ENCODE measurements at regions of chr19 and their contacts with region 1.

Region 1: GRCh38 chr19:4007021-4007835 is at the start of gene PIAS4:
- DNase-seq: peak; percentile 95 to 97 (median 95)
- H3K4me3 ChIP-seq: peak within 1 kb of the TSS; percentile 47 to 73
- H3K4me3 Mint-ChIP-seq: peak within 1 kb of the TSS; percentile 83 to 92 (median 89)
- H3K27ac ChIP-seq: peak within 1 kb of the TSS; percentile 63
- H3K27ac Mint-ChIP-seq: peak within 1 kb of the TSS; percentile 81 to 91 (median 86)
- H3K4me1 ChIP-seq: peaks cover 42% of the 10 kb centered on the region
- H3K4me1 Mint-ChIP-seq: peaks cover 11 to 33% (median 18%) of the 10 kb centered on the region in 4 donors
- H3K27me3 ChIP-seq: no peaks in the 10 kb centered on the region
- H3K27me3 Mint-ChIP-seq: no peaks in the 10 kb centered on the region
- total RNA-seq, gene PIAS4: 38.6 to 42.6 TPM

Region 2: DNA sequence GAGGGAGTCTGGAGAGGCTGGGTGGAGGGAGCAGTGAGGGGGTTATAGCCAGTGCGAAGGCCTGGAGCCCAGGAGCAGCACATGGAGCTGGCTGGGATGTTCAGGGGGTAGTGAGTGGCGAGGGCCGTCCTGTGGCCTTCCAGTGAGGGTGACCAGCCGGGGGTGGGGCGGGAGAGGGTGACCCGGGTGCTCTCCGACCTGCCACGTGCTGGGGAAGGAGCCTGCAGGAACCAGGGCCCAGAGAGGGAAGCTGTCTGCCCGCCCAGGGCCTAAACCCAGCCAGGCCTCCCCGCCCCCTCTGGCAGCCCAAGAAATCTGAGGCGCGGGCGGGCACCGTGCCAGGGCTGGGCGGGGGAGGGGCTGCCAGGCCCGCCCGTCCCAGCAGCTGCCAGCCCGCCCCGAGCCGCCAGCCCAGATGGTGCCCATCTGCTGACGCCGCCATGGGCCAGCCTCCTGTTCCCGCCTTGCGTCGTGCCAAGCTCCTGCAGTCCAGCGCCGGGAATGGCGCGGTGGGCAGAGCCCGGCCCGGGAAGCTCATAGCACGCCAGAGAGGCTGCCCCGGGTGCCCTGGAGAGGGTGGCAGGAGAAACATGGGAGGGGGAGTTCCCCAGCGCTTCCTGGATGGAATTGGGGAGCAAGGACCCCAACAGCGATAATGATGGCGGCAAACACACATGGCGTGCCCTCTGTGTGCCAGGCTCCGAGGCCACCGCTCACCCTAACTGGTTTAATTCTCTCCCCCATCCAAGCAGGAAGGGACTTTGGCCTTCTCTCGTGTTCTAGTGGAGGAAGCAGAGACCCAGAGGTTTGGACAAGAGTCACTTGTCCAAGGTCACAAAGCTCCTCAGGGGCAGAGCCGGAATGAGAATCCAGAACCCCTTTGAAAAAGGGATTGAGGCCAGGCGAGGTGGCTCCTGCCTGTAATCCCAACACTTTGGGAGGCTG is 619.3 kb before region 1 on chr19:
- CTCF ChIA-PET with region 1: no interaction called
- POLR2A ChIA-PET with region 1: no interaction called
- intact Hi-C with region 1: no loop called
- DNase-seq: no peak
- H3K4me3 ChIP-seq: no peak overlapping the region
- H3K4me3 Mint-ChIP-seq: no peak overlapping the region
- H3K27ac ChIP-seq: no peak overlapping the region
- H3K27ac Mint-ChIP-seq: peak overlapping the region in 2 of 7 donors; percentile 12 to 60
- H3K4me1 ChIP-seq: peaks cover 5% of the 10 kb centered on the region
- H3K4me1 Mint-ChIP-seq: peaks cover 10 to 26% (median 17%) of the 10 kb centered on the region in 4 donors
- H3K27me3 ChIP-seq: no peaks in the 10 kb centered on the region
- H3K27me3 Mint-ChIP-seq: no peaks in the 10 kb centered on the region

Region 3: GRCh38 chr19:3970808-3971598 is 36.2 kb before region 1 on chr19 and contains the start of gene DAPK3:
- CTCF ChIA-PET with region 1: no interaction called
- POLR2A ChIA-PET with region 1: interaction called, 3 read pairs
- intact Hi-C with region 1: loop called (anchors 1 kb)
- DNase-seq: peak; percentile 85 to 87 (median 85)
- H3K4me3 ChIP-seq: peak within 1 kb of the TSS; percentile 74 to 78
- H3K4me3 Mint-ChIP-seq: peak within 1 kb of the TSS; percentile 87 to 92 (median 91)
- H3K27ac ChIP-seq: peak within 1 kb of the TSS; percentile 86
- H3K27ac Mint-ChIP-seq: peak within 1 kb of the TSS; percentile 90 to 94 (median 92)
- H3K4me1 ChIP-seq: peaks cover 25% of the 10 kb centered on the region
- H3K4me1 Mint-ChIP-seq: peaks cover 11 to 34% (median 25%) of the 10 kb centered on the region in 4 donors
- H3K27me3 ChIP-seq: no peaks in the 10 kb centered on the region
- H3K27me3 Mint-ChIP-seq: no peaks in the 10 kb centered on the region
- total RNA-seq, gene DAPK3: 40.0 to 40.7 TPM

Region 4: DNA sequence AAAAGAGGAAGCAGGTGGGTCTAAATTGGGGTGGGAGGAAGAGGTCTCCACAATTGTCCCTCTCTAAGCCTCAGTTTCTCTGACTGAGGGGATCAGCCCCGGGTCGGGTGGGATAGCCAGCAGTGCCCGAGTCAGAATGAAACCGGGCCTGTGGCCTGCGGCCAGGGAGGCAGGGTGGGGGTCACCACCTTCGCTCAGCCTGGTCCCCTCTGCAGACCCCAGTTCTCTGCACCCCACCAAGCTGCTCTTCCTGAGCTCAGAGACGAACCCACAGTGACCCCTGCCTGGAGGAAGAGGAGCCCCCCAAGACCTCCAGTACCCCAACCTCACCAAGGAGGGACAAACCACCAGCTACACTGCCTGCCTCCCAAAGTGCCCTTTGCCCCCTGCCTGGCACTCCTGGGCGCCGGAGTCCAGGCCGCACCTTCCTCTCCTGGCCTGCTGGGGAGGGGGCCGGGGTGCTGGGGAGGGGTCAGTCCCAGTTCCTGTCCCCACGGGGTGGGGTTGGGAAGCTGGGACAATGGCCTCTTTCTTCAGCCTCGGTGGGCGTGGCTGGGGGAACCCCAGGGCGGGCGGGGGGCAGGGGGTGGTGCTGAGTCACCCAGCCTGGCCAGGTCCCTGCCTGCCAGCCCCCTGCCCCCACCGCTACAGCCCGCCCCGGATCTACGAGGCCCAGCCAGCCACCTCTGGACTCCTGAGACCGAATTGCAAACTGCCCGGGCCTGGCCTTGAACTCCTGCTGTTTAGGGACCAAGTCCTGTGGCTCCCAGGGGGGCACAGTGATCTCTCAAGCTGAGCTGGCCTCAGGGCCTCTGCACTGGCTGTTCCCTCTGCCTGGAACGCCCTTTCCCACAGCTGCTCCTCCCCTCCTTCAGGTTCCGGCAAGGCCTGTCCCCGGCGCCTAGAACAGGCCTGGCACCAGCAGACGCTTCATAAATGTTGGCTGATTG is 45.1 kb after region 1 on chr19:
- CTCF ChIA-PET with region 1: no interaction called
- POLR2A ChIA-PET with region 1: no interaction called
- intact Hi-C with region 1: no loop called
- DNase-seq: peak in 1 of 5 donors; percentile 33
- H3K4me3 ChIP-seq: no peak overlapping the region
- H3K4me3 Mint-ChIP-seq: peak overlapping the region in 3 of 8 donors; percentile 26 to 46 (median 39)
- H3K27ac ChIP-seq: no peak overlapping the region
- H3K27ac Mint-ChIP-seq: peak overlapping the region in 4 of 7 donors; percentile 19 to 80 (median 48)
- H3K4me1 ChIP-seq: peaks cover 22% of the 10 kb centered on the region
- H3K4me1 Mint-ChIP-seq: peaks cover 23 to 45% (median 26%) of the 10 kb centered on the region in 4 donors
- H3K27me3 ChIP-seq: no peaks in the 10 kb centered on the region
- H3K27me3 Mint-ChIP-seq: no peaks in the 10 kb centered on the region

Region 5: GRCh38 chr19:4123615-4124568 is 116.7 kb after region 1 on chr19 and contains the start of gene MAP2K2:
- CTCF ChIA-PET with region 1: no interaction called
- POLR2A ChIA-PET with region 1: no interaction called
- intact Hi-C with region 1: loop called (anchors 1 kb)
- DNase-seq: peak; percentile 94 to 96 (median 95)
- H3K4me3 ChIP-seq: peak within 1 kb of the TSS; percentile 48 to 63
- H3K4me3 Mint-ChIP-seq: peak within 1 kb of the TSS; percentile 89 to 98 (median 92)
- H3K27ac ChIP-seq: peak within 1 kb of the TSS; percentile 74
- H3K27ac Mint-ChIP-seq: peak within 1 kb of the TSS; percentile 84 to 97 (median 96)
- H3K4me1 ChIP-seq: peaks cover 21% of the 10 kb centered on the region
- H3K4me1 Mint-ChIP-seq: peaks cover 15 to 30% (median 21%) of the 10 kb centered on the region in 4 donors
- H3K27me3 ChIP-seq: no peaks in the 10 kb centered on the region
- H3K27me3 Mint-ChIP-seq: no peaks in the 10 kb centered on the region
- total RNA-seq, gene MAP2K2: 125 to 126 TPM